ENCODE measurements at regions of chr12 and their contacts with region 1.

Region 1: GRCh38 chr12:65121049-65121955 is at the start of gene WIF1:
- DNase-seq: peak; percentile 28
- H3K4me3 Mint-ChIP-seq: peak within 1 kb of the TSS; percentile 41
- H3K27ac Mint-ChIP-seq: no peak within 1 kb of the TSS
- H3K4me1 Mint-ChIP-seq: peaks cover 3% of the 10 kb centered on the region
- H3K27me3 Mint-ChIP-seq: peaks cover 24% of the 10 kb centered on the region
- total RNA-seq, gene WIF1: 0.20 TPM in 1 of 2 experiments, not detected in the other

Region 2: DNA sequence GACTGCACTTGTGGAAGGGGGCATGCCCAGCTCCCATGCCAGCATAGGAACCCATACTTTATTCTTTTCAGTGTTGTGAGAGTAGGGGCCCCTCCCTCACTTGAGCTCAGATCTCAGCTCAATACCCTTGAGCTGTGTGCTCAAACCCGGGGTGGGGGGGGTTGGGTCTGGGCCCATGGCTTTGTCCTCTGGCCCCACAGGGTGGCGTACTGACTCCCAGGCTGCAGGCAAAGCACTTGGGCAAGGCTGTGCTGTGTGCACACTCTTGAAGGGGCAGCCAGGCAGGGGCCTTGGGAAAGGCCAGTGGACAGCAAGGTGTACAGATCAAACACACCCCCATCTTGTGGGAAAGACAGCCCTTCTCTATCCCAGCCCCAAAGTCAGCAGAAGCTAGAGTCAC is 82.0 kb before region 1 on chr12:
- CTCF ChIA-PET with region 1: no interaction called
- intact Hi-C with region 1: no loop called
- DNase-seq: no peak
- H3K4me3 Mint-ChIP-seq: no peak overlapping the region
- H3K27ac Mint-ChIP-seq: no peak overlapping the region
- H3K4me1 Mint-ChIP-seq: no peaks in the 10 kb centered on the region
- H3K27me3 Mint-ChIP-seq: peaks cover 9% of the 10 kb centered on the region

Region 3: GRCh38 chr12:65086236-65086635 is 35.1 kb before region 1 on chr12:
- CTCF ChIA-PET with region 1: no interaction called
- intact Hi-C with region 1: no loop called
- DNase-seq: no peak
- H3K4me3 Mint-ChIP-seq: no peak overlapping the region
- H3K27ac Mint-ChIP-seq: no peak overlapping the region
- H3K4me1 Mint-ChIP-seq: no peaks in the 10 kb centered on the region
- H3K27me3 Mint-ChIP-seq: peaks cover 13% of the 10 kb centered on the region

Region 4: DNA sequence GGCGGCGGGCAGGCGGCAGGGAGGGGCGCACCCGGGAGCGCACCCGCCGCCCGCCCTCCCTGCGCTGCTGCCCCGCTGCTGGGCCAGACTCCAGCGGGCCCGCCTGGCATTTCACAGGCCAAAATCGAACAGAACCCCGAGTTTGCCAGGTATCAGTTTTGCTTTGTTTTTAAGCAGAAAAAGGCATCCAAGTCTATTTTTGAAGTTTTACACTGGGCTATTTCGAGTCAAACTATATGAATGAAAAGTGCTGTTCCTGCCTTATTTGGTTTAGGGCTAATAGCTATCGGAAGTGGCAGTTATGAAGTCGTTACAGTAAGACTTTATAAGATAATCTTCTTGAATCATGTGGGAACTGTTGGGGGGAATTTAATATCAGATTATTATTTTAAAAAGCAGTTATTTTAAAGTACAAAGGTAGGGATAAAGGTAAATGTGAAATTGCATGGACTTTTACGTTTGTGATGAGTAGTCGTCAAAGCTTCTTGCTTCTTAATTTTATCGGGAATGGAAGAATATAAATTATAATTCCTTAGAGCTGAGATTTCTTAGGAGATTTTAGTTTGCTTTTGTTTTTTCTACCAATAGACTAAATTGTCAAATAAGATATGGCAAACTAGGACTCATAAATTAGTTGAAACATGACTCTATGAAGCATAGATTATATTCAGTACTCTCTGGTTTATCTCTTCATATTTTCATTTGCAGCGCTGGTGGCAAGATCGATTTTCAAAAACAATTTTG is 158.2 kb after region 1 on chr12:
- CTCF ChIA-PET with region 1: no interaction called
- intact Hi-C with region 1: loop called (anchors 5 kb)
- DNase-seq: no peak
- H3K4me3 Mint-ChIP-seq: peak overlapping the region; percentile 61
- H3K27ac Mint-ChIP-seq: no peak overlapping the region
- H3K4me1 Mint-ChIP-seq: peaks cover 2% of the 10 kb centered on the region
- H3K27me3 Mint-ChIP-seq: peaks cover 44% of the 10 kb centered on the region

Measured in activated naive CD4-positive, alpha-beta T cell treated with anti-CD3 and anti-CD28 coated beads for 36 hours (primary cell).